ENCODE measurements at regions of chr10 and their contacts with region 1.

Region 1: GRCh38 chr10:103350501-103351260 is at the start of gene PCGF6:
- DNase-seq: peak; percentile 78
- H3K4me3 Mint-ChIP-seq: peak within 1 kb of the TSS; percentile 89
- H3K27ac Mint-ChIP-seq: peak within 1 kb of the TSS; percentile 79
- H3K4me1 Mint-ChIP-seq: no peaks in the 10 kb centered on the region
- H3K27me3 Mint-ChIP-seq: no peaks in the 10 kb centered on the region
- CTCF ChIP-seq: no peak
- total RNA-seq, gene PCGF6: 7.2 and 7.3 TPM in 2 replicates

Region 2: GRCh38 chr10:103333925-103334520 is 16.7 kb before region 1 on chr10:
- CTCF ChIA-PET with region 1: interaction called, 10 read pairs
- POLR2A ChIA-PET with region 1: interaction called, 4 read pairs
- intact Hi-C with region 1: no loop called
- DNase-seq: peak; percentile 36
- H3K4me3 Mint-ChIP-seq: no peak overlapping the region
- H3K27ac Mint-ChIP-seq: no peak overlapping the region
- H3K4me1 Mint-ChIP-seq: no peaks in the 10 kb centered on the region
- H3K27me3 Mint-ChIP-seq: no peaks in the 10 kb centered on the region
- CTCF ChIP-seq: peak; percentile 44

Region 3: GRCh38 chr10:103367782-103368518 is 17.3 kb after region 1 on chr10 and contains the start of gene TAF5:
- CTCF ChIA-PET with region 1: no interaction called
- POLR2A ChIA-PET with region 1: interaction called, 11 read pairs
- intact Hi-C with region 1: no loop called
- DNase-seq: peak; percentile 97
- H3K4me3 Mint-ChIP-seq: peak within 1 kb of the TSS; percentile 85
- H3K27ac Mint-ChIP-seq: peak within 1 kb of the TSS; percentile 93
- H3K4me1 Mint-ChIP-seq: no peaks in the 10 kb centered on the region
- H3K27me3 Mint-ChIP-seq: no peaks in the 10 kb centered on the region
- CTCF ChIP-seq: no peak
- total RNA-seq, gene TAF5: 2.7 and 3.1 TPM in 2 replicates

Region 4: GRCh38 chr10:103605359-103606095 is 254.8 kb after region 1 on chr10:
- CTCF ChIA-PET with region 1: no interaction called
- POLR2A ChIA-PET with region 1: no interaction called
- intact Hi-C with region 1: no loop called
- DNase-seq: peak; percentile 52
- H3K4me3 Mint-ChIP-seq: no peak overlapping the region
- H3K27ac Mint-ChIP-seq: no peak overlapping the region
- H3K4me1 Mint-ChIP-seq: no peaks in the 10 kb centered on the region
- H3K27me3 Mint-ChIP-seq: no peaks in the 10 kb centered on the region
- CTCF ChIP-seq: peak; percentile 66